Psoas muscle (tissue), 8 donors: ENCODE measurements at regions of chr10 and their contacts with region 1.

Region 1: GRCh38 chr10:101504438-101504837 is 83.6 kb downstream of the POLL start:
- DNase-seq: no peak
- ATAC-seq: no peak
- H3K4me3 ChIP-seq: no peak overlapping the region
- H3K27ac ChIP-seq: no peak overlapping the region
- H3K4me1 ChIP-seq: no peaks in the 10 kb centered on the region
- H3K27me3 ChIP-seq: no peaks in the 10 kb centered on the region
- CTCF ChIP-seq: no peak

Region 2: GRCh38 chr10:101536800-101537199 is 32.4 kb after region 1 on chr10:
- intact Hi-C with region 1: loop called in 1 of 2 experiments (anchors 5 kb)
- DNase-seq: no peak
- ATAC-seq: peak in 1 of 4 donors; percentile 43
- H3K4me3 ChIP-seq: no peak overlapping the region
- H3K27ac ChIP-seq: no peak overlapping the region
- H3K4me1 ChIP-seq: no peaks in the 10 kb centered on the region
- H3K27me3 ChIP-seq: no peaks in the 10 kb centered on the region
- CTCF ChIP-seq: peak; percentile 51